Transverse colon (tissue), 4 donors: ENCODE measurements at regions of chr4 and their contacts with region 1.

Region 1: GRCh38 chr4:9898596-9899305 is 117.3 kb downstream of the DRD5 start:
- DNase-seq: peak; percentile 37
- H3K4me3 ChIP-seq: no peak overlapping the region
- H3K27ac ChIP-seq: no peak overlapping the region
- H3K4me1 ChIP-seq: peaks cover 0 to 4% (median 0%) of the 10 kb centered on the region in 4 donors
- H3K27me3 ChIP-seq: no peaks in the 10 kb centered on the region
- CTCF ChIP-seq: peak in 3 of 5 experiments; percentile 22 to 28 (median 28)
- EP300 ChIP-seq: no peak
- POLR2A ChIP-seq: no peak

Region 2: DNA sequence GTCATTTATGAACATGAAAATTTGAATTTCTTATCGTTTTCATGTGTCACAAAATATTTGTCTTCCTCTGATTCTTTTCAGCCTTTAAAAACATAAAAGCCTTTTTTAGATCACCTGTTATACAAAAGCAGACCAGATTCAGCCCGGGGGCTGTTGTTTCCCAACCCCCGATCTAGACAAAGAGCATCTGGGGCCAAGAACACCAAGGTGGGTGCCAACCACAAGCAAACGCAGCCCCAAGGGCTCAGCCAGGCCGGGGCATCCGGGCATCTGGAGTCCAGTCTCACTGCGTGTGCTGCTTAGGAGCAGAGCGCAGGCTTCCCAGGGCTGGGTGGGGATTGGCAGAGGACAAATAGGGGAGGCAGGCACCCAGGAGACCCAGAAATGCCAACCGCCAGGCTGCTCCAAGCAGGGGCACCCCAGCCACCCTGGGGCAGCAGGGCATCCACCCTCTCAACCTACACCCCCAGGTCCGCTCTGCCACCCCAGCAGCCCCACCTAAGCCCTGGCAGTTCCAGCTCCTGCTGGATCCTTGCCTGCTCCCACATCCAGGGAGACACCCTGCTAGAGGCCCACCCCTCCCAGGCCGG is 1105.1 kb before region 1 on chr4:
- in situ Hi-C with region 1: no loop called
- intact Hi-C with region 1: no loop called
- DNase-seq: no peak
- H3K4me3 ChIP-seq: no peak overlapping the region
- H3K27ac ChIP-seq: no peak overlapping the region
- H3K4me1 ChIP-seq: no peaks in the 10 kb centered on the region
- H3K27me3 ChIP-seq: no peaks in the 10 kb centered on the region
- CTCF ChIP-seq: no peak
- EP300 ChIP-seq: no peak
- POLR2A ChIP-seq: no peak

Region 3: GRCh38 chr4:10013722-10014121 is 115.0 kb after region 1 on chr4:
- in situ Hi-C with region 1: no loop called
- intact Hi-C with region 1: no loop called
- DNase-seq: peak; percentile 80
- H3K4me3 ChIP-seq: no peak overlapping the region
- H3K27ac ChIP-seq: no peak overlapping the region
- H3K4me1 ChIP-seq: peaks cover 0 to 6% (median 5%) of the 10 kb centered on the region in 4 donors
- H3K27me3 ChIP-seq: no peaks in the 10 kb centered on the region
- CTCF ChIP-seq: peak; percentile 35 to 71 (median 56)
- EP300 ChIP-seq: no peak
- POLR2A ChIP-seq: no peak

Region 4: DNA sequence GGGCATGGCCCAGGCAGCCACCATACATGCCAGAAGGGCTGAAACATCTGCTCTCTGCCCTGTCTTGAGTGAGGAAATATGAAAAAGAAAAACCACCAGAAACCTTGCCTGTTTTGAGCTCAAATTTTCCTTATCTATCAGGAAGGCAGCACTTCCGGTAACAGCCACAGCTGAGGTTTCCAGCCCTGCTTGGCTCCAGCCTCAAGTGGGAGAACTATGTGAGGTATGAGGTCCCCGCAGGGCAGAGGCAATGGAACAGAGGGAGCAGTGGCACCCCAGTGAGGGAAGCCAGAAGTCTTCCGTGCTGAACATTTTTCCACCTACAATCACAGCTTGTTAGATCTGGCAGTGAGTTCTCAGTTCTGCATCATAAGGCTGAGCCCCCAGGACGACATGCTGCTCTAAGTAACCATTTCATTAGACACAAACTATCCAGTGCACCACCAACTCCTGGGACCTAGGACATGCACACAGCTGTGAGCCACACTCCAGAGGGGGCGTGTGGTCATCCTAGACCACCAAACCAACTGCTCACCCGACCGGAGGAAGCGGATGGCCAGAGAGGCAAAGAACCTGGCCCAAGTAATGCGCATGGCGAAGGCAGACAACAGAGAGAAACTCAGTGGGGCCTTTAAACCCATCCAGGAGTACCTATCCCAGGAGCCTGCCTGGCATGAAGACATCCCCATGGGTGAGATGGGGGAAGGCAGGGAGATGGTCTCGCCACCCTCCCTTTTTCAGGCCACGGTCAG is 195.2 kb after region 1 on chr4:
- in situ Hi-C with region 1: no loop called
- intact Hi-C with region 1: loop called (anchors 5 kb)
- DNase-seq: no peak
- H3K4me3 ChIP-seq: no peak overlapping the region
- H3K27ac ChIP-seq: peak overlapping the region; percentile 72 to 79 (median 75)
- H3K4me1 ChIP-seq: peaks cover 49 to 88% (median 70%) of the 10 kb centered on the region in 4 donors
- H3K27me3 ChIP-seq: no peaks in the 10 kb centered on the region
- CTCF ChIP-seq: no peak
- EP300 ChIP-seq: no peak
- POLR2A ChIP-seq: no peak